SK-N-SH (cell line): ENCODE measurements at regions of chr6 and their contacts with region 1.

Region 1: DNA sequence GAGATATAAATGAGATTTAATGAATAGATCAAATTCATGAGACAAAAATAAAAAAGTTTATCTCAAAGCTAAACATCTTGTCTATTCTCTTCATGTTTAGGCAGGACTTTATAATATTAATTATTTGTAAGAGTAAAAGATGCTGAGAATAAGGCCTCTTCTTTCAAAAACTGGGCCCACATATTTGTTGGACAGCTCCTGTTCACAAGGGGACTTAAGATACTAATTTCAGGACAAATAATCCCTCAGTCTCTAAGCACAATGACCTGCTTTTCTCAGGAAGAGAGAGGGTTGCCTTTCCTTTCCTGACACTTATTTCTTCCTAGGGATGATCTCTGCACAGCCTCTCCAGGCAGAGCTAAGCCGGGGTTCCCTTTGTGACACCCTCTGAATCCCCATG is 43.3 kb downstream of the NOX3 start:
- DNase-seq: no peak
- H3K4me3 ChIP-seq: no peak overlapping the region
- H3K27ac ChIP-seq: no peak overlapping the region
- H3K4me1 ChIP-seq: peaks cover 0 to 15% of the 10 kb centered on the region in 2 experiments; a peak in 2 of 4 replicates
- H3K27me3 ChIP-seq: no peaks in the 10 kb centered on the region
- CTCF ChIP-seq: no peak
- EP300 ChIP-seq: no peak
- RAD21 ChIP-seq: no peak

Region 2: GRCh38 chr6:155380666-155381332 is 31.5 kb before region 1 on chr6:
- CTCF ChIA-PET with region 1: no interaction called
- POLR2A ChIA-PET with region 1: no interaction called
- DNase-seq: no peak
- H3K4me3 ChIP-seq: no peak overlapping the region
- H3K27ac ChIP-seq: no peak overlapping the region
- H3K4me1 ChIP-seq: peaks cover 0 to 2% of the 10 kb centered on the region in 2 experiments; a peak in 1 of 4 replicates
- H3K27me3 ChIP-seq: no peaks in the 10 kb centered on the region
- CTCF ChIP-seq: no peak
- EP300 ChIP-seq: no peak
- RAD21 ChIP-seq: peak; percentile 51; the same call in 1 of the 2 replicates

Region 3: DNA sequence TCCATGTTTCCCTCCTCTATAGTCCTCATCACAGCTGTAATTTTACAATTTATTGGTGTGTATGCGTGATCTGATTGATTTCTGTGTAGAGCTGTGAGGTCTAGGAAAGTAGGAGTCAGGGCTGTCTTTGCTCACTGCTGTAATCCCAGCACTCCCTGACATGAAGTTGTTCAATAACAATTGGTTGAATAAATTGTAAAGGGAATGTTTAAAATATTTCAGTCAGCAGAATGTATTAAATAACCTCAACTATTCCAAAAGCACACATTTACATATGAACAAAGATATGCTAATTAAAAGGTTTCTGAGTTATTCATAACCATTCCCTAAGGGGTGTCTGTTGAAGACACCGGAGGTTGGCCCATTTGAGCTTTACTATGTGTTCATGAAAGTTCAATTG is 11.8 kb after region 1 on chr6:
- CTCF ChIA-PET with region 1: interaction called, 14 read pairs
- POLR2A ChIA-PET with region 1: no interaction called
- DNase-seq: no peak
- H3K4me3 ChIP-seq: no peak overlapping the region
- H3K27ac ChIP-seq: no peak overlapping the region
- H3K4me1 ChIP-seq: peaks cover 0 to 4% of the 10 kb centered on the region in 2 experiments; a peak in 2 of 4 replicates
- H3K27me3 ChIP-seq: no peaks in the 10 kb centered on the region
- CTCF ChIP-seq: no peak
- EP300 ChIP-seq: no peak
- RAD21 ChIP-seq: no peak